ENCODE measurements at regions of chr17 and their contacts with region 1.

Region 1: GRCh38 chr17:511001-511698 is 158.5 kb upstream of the RPH3AL start:
- DNase-seq: peak; percentile 80
- H3K4me3 ChIP-seq: peak overlapping the region; percentile 2; the same call in 1 of the 2 replicates
- H3K27me3 ChIP-seq: no peaks in the 10 kb centered on the region
- CTCF ChIP-seq: 0 out of 2 replicates have a peak, but pooled peaks have one; percentile 12

Region 2: DNA sequence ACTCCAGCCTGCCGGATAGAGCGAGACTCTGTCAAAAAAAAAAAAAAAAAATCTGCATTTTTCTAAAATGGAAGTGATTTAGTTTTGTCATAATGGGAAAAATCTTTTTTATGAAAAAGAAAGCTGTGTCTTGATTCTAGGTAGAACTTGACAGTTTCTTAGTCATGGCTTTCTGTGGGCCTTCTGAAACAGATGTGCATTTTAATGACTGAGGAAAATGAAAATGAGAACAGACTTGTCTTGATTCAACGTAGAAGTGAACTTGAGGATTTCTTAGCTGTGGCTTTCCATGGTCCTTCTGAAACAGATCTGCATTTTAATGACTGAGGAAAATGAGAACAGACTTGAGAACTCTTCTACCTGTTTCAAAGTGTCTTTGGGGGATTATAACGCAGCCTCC is 31.8 kb after region 1 on chr17:
- CTCF ChIA-PET with region 1: no interaction called
- POLR2A ChIA-PET with region 1: interaction called, 12 read pairs
- DNase-seq: no peak
- H3K4me3 ChIP-seq: no peak overlapping the region
- H3K27me3 ChIP-seq: no peaks in the 10 kb centered on the region
- CTCF ChIP-seq: no peak

Region 3: DNA sequence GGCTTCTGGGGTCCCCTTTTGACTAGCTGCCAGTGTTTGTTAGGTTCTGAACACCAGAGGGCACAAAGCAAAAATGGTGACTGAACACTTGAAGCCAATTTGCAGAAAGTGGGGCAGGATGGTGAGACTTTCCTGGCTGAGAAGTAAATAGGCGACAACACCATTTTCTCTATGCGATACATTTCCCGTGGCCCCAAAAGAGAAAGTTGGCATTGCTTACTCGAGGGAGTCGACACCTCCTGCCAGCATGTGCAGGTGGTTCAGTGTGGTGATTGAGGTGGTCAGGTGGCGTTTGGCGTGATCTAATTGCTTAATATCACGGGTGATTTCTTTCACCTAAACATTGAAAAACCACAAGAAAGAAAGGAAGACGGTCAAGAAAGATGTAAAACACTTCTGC is 144.5 kb after region 1 on chr17:
- CTCF ChIA-PET with region 1: no interaction called
- POLR2A ChIA-PET with region 1: no interaction called
- DNase-seq: no peak
- H3K4me3 ChIP-seq: no peak overlapping the region
- H3K27me3 ChIP-seq: no peaks in the 10 kb centered on the region
- CTCF ChIP-seq: no peak